Heart left ventricle (tissue), 16 donors: ENCODE measurements at regions of chr7 and their contacts with region 1.

Region 1: DNA sequence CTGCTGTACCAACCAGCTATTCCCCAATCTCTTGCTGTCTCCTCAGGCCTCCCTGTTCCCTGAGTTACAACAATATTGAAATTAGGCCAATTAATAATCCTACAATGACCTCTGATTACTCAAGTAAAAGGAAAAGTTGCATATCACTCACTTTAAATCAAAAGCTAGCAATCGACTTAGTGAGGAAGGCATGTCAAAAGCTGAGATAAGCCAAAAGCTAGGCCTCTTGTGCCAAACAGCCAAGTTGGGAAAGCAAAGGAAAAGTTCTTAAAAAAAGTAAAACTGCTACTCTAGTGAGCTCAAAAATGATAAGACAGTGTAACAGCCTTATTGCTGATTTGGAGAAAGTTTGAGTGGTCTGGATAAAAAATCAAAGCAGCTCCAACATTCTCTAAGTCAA is 129.8 kb downstream of the LSMEM1 start:
- DNase-seq: no peak
- ATAC-seq: no peak
- H3K4me3 ChIP-seq: no peak overlapping the region
- H3K27ac ChIP-seq: no peak overlapping the region
- H3K4me1 ChIP-seq: no peaks in the 10 kb centered on the region
- H3K27me3 ChIP-seq: no peaks in the 10 kb centered on the region
- CTCF ChIP-seq: no peak
- POLR2A ChIP-seq: no peak

Region 2: DNA sequence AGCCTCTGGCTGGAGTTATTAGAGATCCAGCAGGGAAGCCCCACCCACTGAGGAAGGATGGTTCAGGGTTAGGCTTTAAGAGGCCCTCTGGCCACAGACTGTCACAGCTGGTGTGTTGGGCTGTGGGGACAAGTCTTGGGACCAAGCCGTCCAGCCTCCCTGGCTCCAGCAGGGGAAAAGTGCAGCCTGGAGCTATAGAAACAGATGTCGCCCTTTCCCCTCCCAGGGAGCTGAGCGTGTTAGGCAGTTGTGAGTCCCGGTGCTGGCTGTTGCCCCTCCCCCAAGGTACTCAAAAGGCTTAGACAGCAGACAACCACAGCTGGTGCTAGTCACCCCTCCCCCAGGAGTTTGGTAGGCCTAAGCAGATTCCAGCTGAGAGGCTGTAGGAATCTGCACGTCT is 36.1 kb after region 1 on chr7:
- intact Hi-C with region 1: loop called in 1 of 10 experiments (anchors 2 kb)
- DNase-seq: no peak
- ATAC-seq: no peak
- H3K4me3 ChIP-seq: no peak overlapping the region
- H3K27ac ChIP-seq: no peak overlapping the region
- H3K4me1 ChIP-seq: no peaks in the 10 kb centered on the region
- H3K27me3 ChIP-seq: no peaks in the 10 kb centered on the region
- CTCF ChIP-seq: no peak
- POLR2A ChIP-seq: no peak